ENCODE measurements at regions of chr15 and their contacts with region 1.

Region 1: DNA sequence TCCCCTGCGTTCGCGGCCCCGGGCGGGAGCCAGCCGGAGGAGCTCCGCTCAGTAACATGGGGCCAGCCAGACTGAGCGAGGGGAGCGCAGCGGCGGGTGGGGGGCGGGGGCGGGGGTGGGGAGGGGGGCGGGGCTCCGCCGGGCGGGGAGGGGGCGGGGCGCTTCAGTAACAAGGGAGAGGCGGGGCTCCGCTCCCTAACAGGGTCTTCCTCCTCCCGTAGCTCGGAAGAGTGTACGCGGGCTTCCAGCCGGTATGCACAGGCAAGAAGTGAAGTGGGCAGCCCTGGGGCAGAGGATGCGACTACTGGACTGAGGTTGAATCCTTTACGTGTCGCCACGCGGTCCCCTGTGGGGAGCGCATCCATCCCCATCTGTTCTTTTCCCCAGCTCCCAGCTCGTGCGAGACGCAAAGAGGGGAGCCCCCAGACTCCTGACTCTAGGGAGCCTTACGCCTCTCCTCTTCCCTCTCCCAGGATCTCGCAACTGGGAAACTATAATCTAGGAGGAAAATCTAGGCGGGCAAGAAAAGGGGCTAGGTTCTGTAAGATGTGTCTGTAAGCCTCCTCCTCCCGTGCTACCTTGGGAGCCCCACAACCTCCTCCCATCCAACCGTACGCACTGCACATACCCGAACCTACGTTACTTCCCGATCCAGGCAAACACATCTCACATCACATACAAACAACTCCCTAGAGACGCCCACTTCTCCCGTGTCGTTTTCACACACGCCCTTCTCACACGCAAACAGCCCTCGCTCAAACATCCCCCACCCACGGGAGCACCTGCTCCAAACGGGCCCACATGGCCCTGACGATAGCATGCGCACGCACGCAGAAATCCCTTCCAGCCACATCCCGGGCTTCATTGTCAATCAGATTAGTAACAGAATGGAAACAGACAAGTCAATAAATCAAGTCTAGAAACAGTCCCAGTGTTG is at the start of gene SHF:
- DNase-seq: peak; percentile 84
- H3K4me3 Mint-ChIP-seq: peak within 1 kb of the TSS; percentile 86
- H3K27ac Mint-ChIP-seq: peak within 1 kb of the TSS; percentile 95
- H3K4me1 Mint-ChIP-seq: peaks cover 26% of the 10 kb centered on the region
- H3K27me3 Mint-ChIP-seq: peaks cover 11% of the 10 kb centered on the region
- total RNA-seq, gene SHF: 14.4 and 16.1 TPM in 2 replicates

Region 2: GRCh38 chr15:45064386-45064785 is 123.8 kb before region 1 on chr15:
- intact Hi-C with region 1: no loop called
- DNase-seq: no peak
- H3K4me3 Mint-ChIP-seq: no peak overlapping the region
- H3K27ac Mint-ChIP-seq: no peak overlapping the region
- H3K4me1 Mint-ChIP-seq: peaks cover 18% of the 10 kb centered on the region
- H3K27me3 Mint-ChIP-seq: no peaks in the 10 kb centered on the region

Region 3: GRCh38 chr15:45166834-45167630 is 21.1 kb before region 1 on chr15:
- intact Hi-C with region 1: loop called (anchors 1 kb)
- DNase-seq: peak; percentile 94
- H3K4me3 Mint-ChIP-seq: peak overlapping the region; percentile 73
- H3K27ac Mint-ChIP-seq: peak overlapping the region; percentile 84
- H3K4me1 Mint-ChIP-seq: peaks cover 19% of the 10 kb centered on the region
- H3K27me3 Mint-ChIP-seq: no peaks in the 10 kb centered on the region

Region 4: GRCh38 chr15:45177285-45177684 is 10.9 kb before region 1 on chr15:
- intact Hi-C with region 1: no loop called
- DNase-seq: no peak
- H3K4me3 Mint-ChIP-seq: no peak overlapping the region
- H3K27ac Mint-ChIP-seq: no peak overlapping the region
- H3K4me1 Mint-ChIP-seq: peaks cover 9% of the 10 kb centered on the region
- H3K27me3 Mint-ChIP-seq: no peaks in the 10 kb centered on the region

Region 5: GRCh38 chr15:45205192-45205591 is 17.0 kb after region 1 on chr15:
- intact Hi-C with region 1: loop called (anchors 2 kb)
- DNase-seq: peak; percentile 90
- H3K4me3 Mint-ChIP-seq: no peak overlapping the region
- H3K27ac Mint-ChIP-seq: peak overlapping the region; percentile 32
- H3K4me1 Mint-ChIP-seq: peaks cover 8% of the 10 kb centered on the region
- H3K27me3 Mint-ChIP-seq: peaks cover 6% of the 10 kb centered on the region

Region 6: DNA sequence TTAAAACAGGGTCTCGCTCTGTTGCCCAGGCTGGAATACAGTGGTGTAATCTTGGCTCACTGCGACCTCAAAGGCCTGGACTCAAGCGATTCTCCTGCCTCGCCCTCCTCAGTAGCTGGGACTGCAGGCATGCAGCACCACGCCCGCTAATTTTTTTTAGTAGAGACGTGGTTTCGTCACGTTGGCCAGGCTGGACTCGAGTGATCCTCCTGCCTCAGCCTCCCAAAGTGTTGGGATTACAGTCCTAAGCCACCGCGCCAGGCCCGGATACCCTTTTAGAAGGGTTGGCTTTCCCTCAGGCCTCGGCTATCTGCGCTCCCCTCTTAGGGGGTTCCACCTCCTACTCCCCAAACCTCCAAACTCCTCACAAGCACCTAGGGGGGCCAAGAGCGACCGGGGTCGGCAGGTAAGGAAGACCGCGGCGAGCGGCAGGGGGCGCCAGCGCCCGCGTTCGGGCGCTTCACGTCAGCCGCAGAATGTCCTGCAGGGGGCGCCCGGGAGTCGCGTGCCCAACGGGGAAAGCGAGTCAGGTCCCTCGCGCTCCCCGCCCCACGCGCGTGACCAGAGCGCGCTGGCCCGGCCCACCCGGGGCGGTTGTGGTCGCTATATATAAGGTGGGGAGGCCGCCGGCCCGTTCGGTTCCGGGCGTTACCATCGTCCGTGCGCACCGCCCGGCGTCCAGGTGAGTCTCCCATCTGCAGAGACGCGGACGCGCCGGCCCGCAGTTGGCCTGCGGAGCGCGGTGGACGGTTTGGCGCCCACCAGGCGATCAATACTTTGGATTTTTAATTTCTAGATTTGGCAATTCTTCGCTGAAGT is 242.0 kb after region 1 on chr15:
- intact Hi-C with region 1: no loop called
- DNase-seq: peak; percentile 97
- H3K4me3 Mint-ChIP-seq: peak overlapping the region; percentile 70
- H3K27ac Mint-ChIP-seq: no peak overlapping the region
- H3K4me1 Mint-ChIP-seq: peaks cover 2% of the 10 kb centered on the region
- H3K27me3 Mint-ChIP-seq: peaks cover 23% of the 10 kb centered on the region